ENCODE measurements at regions of chr10 and their contacts with region 1.

Region 1: DNA sequence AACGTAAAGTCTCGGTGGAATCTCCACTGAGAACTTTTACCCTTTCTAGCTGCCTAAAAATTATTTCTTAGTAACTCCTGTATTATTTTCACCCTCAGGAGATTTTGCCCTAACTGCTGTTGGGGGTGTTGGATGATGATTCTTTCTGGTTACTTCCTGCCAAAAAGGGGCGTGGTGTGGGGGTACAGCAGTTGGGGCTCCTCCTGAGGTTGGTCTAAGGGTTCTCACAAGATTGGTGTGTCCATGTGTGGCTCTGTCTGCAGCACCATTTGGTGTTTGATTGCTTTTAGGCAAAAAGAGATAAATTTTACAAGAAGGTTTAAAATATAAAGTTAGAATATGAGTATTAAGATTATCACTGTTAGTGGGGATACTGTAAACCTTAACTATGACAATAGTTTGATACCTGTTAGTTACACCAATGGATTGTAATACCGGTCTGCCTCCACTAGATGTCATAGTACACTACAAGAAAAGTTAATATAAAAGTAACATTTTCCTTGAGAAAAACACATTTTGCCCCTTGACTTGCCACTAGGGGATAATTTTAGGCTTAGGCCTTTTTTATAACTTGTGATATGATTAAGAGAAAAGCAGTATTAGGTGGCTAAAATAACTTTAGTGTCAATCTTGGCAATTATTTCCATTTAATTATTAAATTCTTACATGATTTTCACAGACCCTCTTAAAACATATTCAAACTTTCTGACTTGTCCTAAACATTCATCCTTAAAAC is 928.7 kb downstream of the IPMK start:
- ATAC-seq: peak in 1 of 8 experiments; percentile 38
- H3K4me3 ChIP-seq: no peak overlapping the region
- H3K27ac ChIP-seq: no peak overlapping the region
- H3K4me1 ChIP-seq: peaks cover 0 to 3% of the 10 kb centered on the region in 2 donors

Region 2: GRCh38 chr10:57657164-57657765 is 318.3 kb after region 1 on chr10:
- in situ Hi-C with region 1: loop called in 2 of 9 experiments (anchors 10 to 25 kb)
- ATAC-seq: peak; percentile 61 to 88 (median 68)
- H3K4me3 ChIP-seq: no peak overlapping the region
- H3K27ac ChIP-seq: no peak overlapping the region
- H3K4me1 ChIP-seq: no peaks in the 10 kb centered on the region

Region 3: DNA sequence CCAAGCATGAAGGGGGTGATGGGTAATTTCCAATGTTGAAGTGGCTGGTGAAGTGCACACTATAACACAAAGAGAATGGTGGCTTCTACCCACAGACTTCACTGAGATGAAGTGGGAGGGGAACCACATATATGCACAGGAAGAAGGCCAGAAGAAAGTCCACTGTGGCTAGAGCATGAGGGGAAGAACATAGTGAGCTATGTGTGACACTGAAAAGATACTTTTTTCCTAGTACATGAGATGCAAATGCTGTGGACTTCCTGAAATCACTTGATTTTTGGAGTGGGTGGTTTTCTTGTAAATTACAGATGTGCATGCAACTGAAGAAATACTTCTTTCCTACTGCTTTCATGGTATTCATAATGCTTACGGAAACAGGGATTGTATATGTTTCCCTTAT is 1721.9 kb after region 1 on chr10:
- in situ Hi-C with region 1: no loop called
- ATAC-seq: peak in 1 of 8 experiments; percentile 46
- H3K4me3 ChIP-seq: no peak overlapping the region
- H3K27ac ChIP-seq: no peak overlapping the region
- H3K4me1 ChIP-seq: peaks cover 9 to 18% of the 10 kb centered on the region in 2 donors

Measured in motor neuron (in vitro differentiated cells).